Activated T-helper 1 cell treated with anti-CD3 and anti-CD28 coated beads, Interleukin-12 subunit alpha, Interleukin-12 subunit beta, Interleukin-2, Interleukin-4 antibody, amounts not matched to agents 30 ng/mL and 10 ng/mL and 1 ng/mL, durations not matched to agents 14 hours and 24 hours and 36 hours (primary cell): ENCODE measurements at regions of chr10 and their contacts with region 1.

Region 1: DNA sequence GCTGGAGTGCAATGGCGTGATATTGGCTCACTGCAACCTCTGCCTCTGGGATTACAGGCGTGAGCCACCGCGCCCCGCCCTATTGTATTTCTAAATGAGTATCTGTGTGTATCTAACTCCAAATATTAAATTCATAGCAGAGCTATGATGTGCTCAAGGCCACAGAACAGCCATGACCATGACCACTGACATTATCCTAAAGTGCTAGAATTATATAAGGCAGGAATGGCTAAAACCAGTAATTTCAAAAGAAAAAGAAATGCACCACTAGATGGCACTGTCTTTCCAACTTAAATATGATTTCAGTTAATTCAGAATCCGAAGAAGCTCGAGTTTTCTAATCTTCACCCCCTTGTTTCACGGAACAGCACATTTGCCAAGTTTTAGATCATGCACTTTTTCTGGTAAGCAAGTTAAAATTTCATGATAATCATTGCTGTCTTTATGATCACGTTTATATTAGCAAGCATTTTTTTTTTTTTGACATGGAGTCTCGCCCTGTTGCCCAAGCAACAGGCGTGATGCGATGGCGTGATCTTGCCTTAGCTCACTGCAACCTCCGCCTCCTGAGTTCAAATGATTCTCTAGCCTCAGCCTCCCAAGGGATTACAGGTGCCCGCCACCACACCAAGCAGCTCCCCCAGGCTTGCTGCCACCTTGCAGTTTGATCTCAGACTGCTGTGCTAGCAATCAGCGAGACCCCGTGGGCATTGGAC is 65.3 kb downstream of the OR13A1 start:
- DNase-seq: no peak
- H3K4me3 Mint-ChIP-seq: peak overlapping the region; percentile 24
- H3K27ac Mint-ChIP-seq: no peak overlapping the region
- H3K4me1 Mint-ChIP-seq: peaks cover 33% of the 10 kb centered on the region
- H3K27me3 Mint-ChIP-seq: peaks cover 18% of the 10 kb centered on the region

Region 2: GRCh38 chr10:43712821-43713584 is 1537.1 kb before region 1 on chr10:
- intact Hi-C with region 1: no loop called
- DNase-seq: no peak
- H3K4me3 Mint-ChIP-seq: no peak overlapping the region
- H3K27ac Mint-ChIP-seq: no peak overlapping the region
- H3K4me1 Mint-ChIP-seq: no peaks in the 10 kb centered on the region
- H3K27me3 Mint-ChIP-seq: peaks cover 2% of the 10 kb centered on the region

Region 3: GRCh38 chr10:45353186-45353585 is 103.0 kb after region 1 on chr10:
- intact Hi-C with region 1: loop called (anchors 2 kb)
- DNase-seq: no peak
- H3K4me3 Mint-ChIP-seq: no peak overlapping the region
- H3K27ac Mint-ChIP-seq: peak overlapping the region; percentile 56
- H3K4me1 Mint-ChIP-seq: peaks cover 42% of the 10 kb centered on the region
- H3K27me3 Mint-ChIP-seq: peaks cover 8% of the 10 kb centered on the region

Region 4: DNA sequence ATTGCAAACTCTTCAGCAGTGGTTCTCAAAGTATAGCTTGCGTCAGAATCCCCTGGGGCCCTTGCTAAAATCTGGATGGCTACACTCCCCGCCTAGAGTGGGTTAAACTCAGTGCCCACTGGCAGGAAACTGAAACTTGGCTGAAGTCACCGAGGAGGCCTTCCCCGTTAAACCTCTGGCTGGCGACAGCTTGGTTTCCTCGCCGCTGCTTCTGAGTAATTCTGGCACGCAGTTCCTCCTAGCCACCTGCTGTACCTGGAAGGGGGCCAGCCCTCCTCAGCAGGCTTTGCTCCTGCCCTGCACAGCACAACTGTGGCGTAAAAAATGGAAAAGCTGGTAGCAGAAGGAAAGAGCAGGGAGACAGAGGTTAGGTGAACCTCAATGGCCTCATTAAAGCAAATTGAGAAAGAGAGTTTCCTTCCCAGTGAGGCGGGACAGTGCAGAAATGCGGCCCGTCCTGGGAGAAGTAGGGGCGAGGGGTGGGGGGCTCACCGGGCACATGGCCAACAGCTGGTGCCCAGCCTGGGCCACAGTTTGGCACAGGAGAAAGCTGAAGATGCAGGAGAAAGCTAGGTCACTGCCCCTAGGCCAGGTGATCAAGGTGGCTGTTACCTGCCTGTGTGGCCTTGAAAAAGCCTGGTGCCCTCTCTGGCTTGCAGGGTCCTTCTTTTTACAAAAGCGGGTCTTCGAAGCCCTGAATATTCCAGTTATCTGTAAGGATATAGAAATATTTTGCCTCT is 170.5 kb after region 1 on chr10:
- intact Hi-C with region 1: loop called (anchors 2 kb)
- DNase-seq: peak; percentile 65
- H3K4me3 Mint-ChIP-seq: peak overlapping the region; percentile 96
- H3K27ac Mint-ChIP-seq: peak overlapping the region; percentile 98
- H3K4me1 Mint-ChIP-seq: peaks cover 91% of the 10 kb centered on the region
- H3K27me3 Mint-ChIP-seq: no peaks in the 10 kb centered on the region

Region 5: DNA sequence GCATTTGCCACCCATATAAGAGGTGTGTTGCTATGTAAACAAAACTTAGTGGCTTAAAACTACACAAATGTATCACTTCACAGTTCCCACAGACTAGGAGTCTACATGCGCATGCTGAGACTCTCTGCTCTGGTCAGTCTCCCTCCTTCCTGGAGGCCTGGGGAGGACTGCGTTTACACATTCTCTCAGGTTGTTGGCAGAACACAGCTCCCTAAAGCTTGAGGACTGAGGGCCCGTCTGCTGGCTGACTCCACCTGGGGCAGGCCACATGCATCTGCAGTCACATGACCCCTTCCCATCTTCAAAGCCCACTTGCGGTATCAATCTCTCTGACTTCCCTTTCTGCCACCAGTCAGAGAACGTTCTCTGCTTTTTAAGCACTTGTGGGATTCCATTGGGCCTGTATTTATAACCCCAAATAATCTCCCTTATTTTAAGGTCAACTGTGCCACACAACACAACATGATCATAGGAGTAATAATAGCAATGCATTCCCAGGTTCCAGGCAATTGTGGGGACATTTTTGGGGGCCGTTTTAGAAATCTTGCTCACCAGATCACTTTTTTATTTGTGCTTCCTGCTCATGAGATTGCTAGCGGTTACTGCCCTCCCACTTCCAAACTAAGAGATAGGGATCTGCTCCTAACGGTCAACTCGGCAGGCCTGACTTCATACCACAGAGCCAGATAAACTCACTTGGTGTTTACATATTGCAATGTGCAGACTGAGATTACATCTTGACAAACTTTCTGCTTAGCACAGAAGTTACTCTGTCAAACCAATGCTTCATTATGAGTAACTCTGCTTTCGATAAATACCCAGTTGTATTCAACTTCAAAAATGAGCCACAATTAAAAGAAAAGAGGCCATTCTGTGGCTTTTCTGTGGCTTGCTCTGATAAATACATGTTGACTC is 220.2 kb after region 1 on chr10:
- intact Hi-C with region 1: loop called (anchors 1 kb)
- DNase-seq: peak; percentile 17
- H3K4me3 Mint-ChIP-seq: peak overlapping the region; percentile 27
- H3K27ac Mint-ChIP-seq: peak overlapping the region; percentile 69
- H3K4me1 Mint-ChIP-seq: peaks cover 21% of the 10 kb centered on the region
- H3K27me3 Mint-ChIP-seq: no peaks in the 10 kb centered on the region

Region 6: DNA sequence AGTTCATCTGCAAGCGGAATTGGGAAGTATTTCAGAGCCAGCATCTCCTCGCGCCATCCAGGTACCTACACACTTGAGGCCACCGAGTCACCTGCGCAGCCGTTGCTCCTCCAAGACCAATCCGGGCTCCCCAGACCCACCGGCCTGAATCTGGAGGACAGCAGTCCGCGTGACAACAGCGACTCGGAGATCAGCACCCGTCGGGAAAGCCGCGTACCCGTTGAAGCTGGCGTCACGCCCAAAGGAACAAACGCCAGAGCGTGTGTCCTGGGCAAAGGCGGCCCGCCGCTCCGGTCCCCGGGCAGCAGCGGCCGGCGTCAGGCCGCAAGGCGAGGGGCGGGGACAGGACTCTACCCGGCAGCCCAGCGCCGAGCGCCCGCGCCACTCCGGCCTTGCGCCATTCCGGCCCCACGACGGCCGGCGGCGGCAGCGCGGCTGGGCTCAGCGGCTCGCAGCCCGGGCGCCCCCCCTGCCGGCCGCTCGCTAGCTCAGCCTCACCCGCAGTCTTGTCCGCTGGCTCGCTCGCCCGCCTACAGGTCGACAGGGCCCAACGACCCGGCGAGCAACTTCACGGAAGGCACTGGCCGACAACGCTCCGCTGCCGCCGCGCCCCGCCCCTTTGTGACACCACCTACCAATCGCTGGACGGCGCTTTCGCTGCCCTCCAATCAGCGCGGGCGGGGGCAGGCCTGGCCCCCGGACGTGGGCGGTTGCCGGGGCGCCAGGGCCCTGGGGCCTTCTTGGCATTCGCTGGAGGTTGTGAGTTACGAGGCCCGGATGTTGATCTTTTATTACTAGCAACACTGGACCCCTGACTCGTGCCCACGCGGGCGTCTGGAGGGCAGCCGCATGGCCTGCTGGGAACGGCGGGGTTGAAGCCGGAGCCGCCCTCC is 422.3 kb after region 1 on chr10 and contains the start of gene ZFAND4:
- intact Hi-C with region 1: loop called (anchors 2 kb)
- DNase-seq: peak; percentile 94
- H3K4me3 Mint-ChIP-seq: peak within 1 kb of the TSS; percentile 87
- H3K27ac Mint-ChIP-seq: peak within 1 kb of the TSS; percentile 79
- H3K4me1 Mint-ChIP-seq: peaks cover 30% of the 10 kb centered on the region
- H3K27me3 Mint-ChIP-seq: no peaks in the 10 kb centered on the region
- total RNA-seq, gene ZFAND4: 11.1 and 11.5 TPM in 2 replicates